Caco-2 (cell line): ENCODE measurements at regions of chr13 and their contacts with region 1.

Region 1: GRCh38 chr13:71320452-71320851 is 546.6 kb downstream of the DACH1 start:
- DNase-seq: peak in 1 of 2 experiments; percentile 55
- H3K4me3 ChIP-seq: no peak overlapping the region
- H3K4me3 Mint-ChIP-seq: no peak overlapping the region
- H3K27ac Mint-ChIP-seq: no peak overlapping the region
- H3K4me1 ChIP-seq: no peaks in the 10 kb centered on the region
- H3K4me1 Mint-ChIP-seq: no peaks in the 10 kb centered on the region
- H3K27me3 ChIP-seq: no peaks in the 10 kb centered on the region
- H3K27me3 Mint-ChIP-seq: no peaks in the 10 kb centered on the region
- CTCF ChIP-seq: peak; percentile 67 to 69

Region 2: GRCh38 chr13:71067165-71067815 is 253.2 kb before region 1 on chr13:
- CTCF ChIA-PET with region 1: no interaction called
- POLR2A ChIA-PET with region 1: no interaction called
- intact Hi-C with region 1: no loop called
- DNase-seq: peak in 1 of 2 experiments; percentile 28
- H3K4me3 ChIP-seq: no peak overlapping the region
- H3K4me3 Mint-ChIP-seq: no peak overlapping the region
- H3K27ac Mint-ChIP-seq: no peak overlapping the region
- H3K4me1 ChIP-seq: peaks cover 11% of the 10 kb centered on the region
- H3K4me1 Mint-ChIP-seq: no peaks in the 10 kb centered on the region
- H3K27me3 ChIP-seq: no peaks in the 10 kb centered on the region
- H3K27me3 Mint-ChIP-seq: no peaks in the 10 kb centered on the region
- CTCF ChIP-seq: peak in 1 of 2 experiments; percentile 46

Region 3: GRCh38 chr13:71240911-71241310 is 79.5 kb before region 1 on chr13:
- CTCF ChIA-PET with region 1: no interaction called
- POLR2A ChIA-PET with region 1: no interaction called
- intact Hi-C with region 1: loop called (anchors 2 kb)
- DNase-seq: peak in 1 of 2 experiments; percentile 16
- H3K4me3 ChIP-seq: no peak overlapping the region
- H3K4me3 Mint-ChIP-seq: no peak overlapping the region
- H3K27ac Mint-ChIP-seq: no peak overlapping the region
- H3K4me1 ChIP-seq: no peaks in the 10 kb centered on the region
- H3K4me1 Mint-ChIP-seq: no peaks in the 10 kb centered on the region
- H3K27me3 ChIP-seq: no peaks in the 10 kb centered on the region
- H3K27me3 Mint-ChIP-seq: no peaks in the 10 kb centered on the region
- CTCF ChIP-seq: peak; percentile 40 to 57

Region 4: GRCh38 chr13:71477735-71478134 is 157.3 kb after region 1 on chr13:
- CTCF ChIA-PET with region 1: no interaction called
- POLR2A ChIA-PET with region 1: no interaction called
- intact Hi-C with region 1: loop called (anchors 1 kb)
- DNase-seq: no peak
- H3K4me3 ChIP-seq: no peak overlapping the region
- H3K4me3 Mint-ChIP-seq: no peak overlapping the region
- H3K27ac Mint-ChIP-seq: no peak overlapping the region
- H3K4me1 ChIP-seq: no peaks in the 10 kb centered on the region
- H3K4me1 Mint-ChIP-seq: peaks cover 6% of the 10 kb centered on the region
- H3K27me3 ChIP-seq: no peaks in the 10 kb centered on the region
- H3K27me3 Mint-ChIP-seq: no peaks in the 10 kb centered on the region
- CTCF ChIP-seq: peak; percentile 35 to 50

Region 5: GRCh38 chr13:71672512-71672911 is 352.1 kb after region 1 on chr13:
- CTCF ChIA-PET with region 1: no interaction called
- POLR2A ChIA-PET with region 1: no interaction called
- intact Hi-C with region 1: loop called (anchors 2 kb)
- DNase-seq: peak in 1 of 2 experiments; percentile 5
- H3K4me3 ChIP-seq: no peak overlapping the region
- H3K4me3 Mint-ChIP-seq: no peak overlapping the region
- H3K27ac Mint-ChIP-seq: no peak overlapping the region
- H3K4me1 ChIP-seq: no peaks in the 10 kb centered on the region
- H3K4me1 Mint-ChIP-seq: no peaks in the 10 kb centered on the region
- H3K27me3 ChIP-seq: no peaks in the 10 kb centered on the region
- H3K27me3 Mint-ChIP-seq: no peaks in the 10 kb centered on the region
- CTCF ChIP-seq: peak in 1 of 2 experiments; percentile 26

Region 6: GRCh38 chr13:71879129-71879535 is 558.7 kb after region 1 on chr13:
- CTCF ChIA-PET with region 1: no interaction called
- POLR2A ChIA-PET with region 1: no interaction called
- intact Hi-C with region 1: loop called (anchors 1 kb)
- DNase-seq: peak in 1 of 2 experiments; percentile 45
- H3K4me3 ChIP-seq: no peak overlapping the region
- H3K4me3 Mint-ChIP-seq: no peak overlapping the region
- H3K27ac Mint-ChIP-seq: no peak overlapping the region
- H3K4me1 ChIP-seq: no peaks in the 10 kb centered on the region
- H3K4me1 Mint-ChIP-seq: peaks cover 6% of the 10 kb centered on the region
- H3K27me3 ChIP-seq: no peaks in the 10 kb centered on the region
- H3K27me3 Mint-ChIP-seq: peaks cover 3% of the 10 kb centered on the region
- CTCF ChIP-seq: peak; percentile 55 to 65

Region 7: DNA sequence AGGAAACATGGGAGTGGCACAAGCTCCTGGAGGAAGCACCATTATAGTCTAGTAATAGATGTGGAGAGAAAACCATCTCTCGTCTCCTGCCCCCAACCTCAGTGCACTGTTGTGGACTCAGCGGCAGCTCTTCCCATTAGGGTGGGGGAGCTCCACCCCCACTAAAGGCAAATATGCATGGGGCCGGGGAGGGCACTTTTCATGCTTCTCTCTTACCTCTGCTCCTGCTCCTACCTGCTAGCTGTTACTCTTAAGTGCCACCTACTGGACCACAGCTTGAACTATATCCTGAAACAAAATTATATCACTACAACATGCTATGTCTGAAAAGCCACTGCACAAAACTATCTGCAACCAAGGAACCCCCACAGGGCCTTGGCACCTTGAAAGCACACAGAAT is 659.2 kb after region 1 on chr13:
- CTCF ChIA-PET with region 1: no interaction called
- POLR2A ChIA-PET with region 1: no interaction called
- intact Hi-C with region 1: loop called (anchors 1 kb)
- DNase-seq: peak in 1 of 2 experiments; percentile 22
- H3K4me3 ChIP-seq: no peak overlapping the region
- H3K4me3 Mint-ChIP-seq: no peak overlapping the region
- H3K27ac Mint-ChIP-seq: no peak overlapping the region
- H3K4me1 ChIP-seq: no peaks in the 10 kb centered on the region
- H3K4me1 Mint-ChIP-seq: no peaks in the 10 kb centered on the region
- H3K27me3 ChIP-seq: no peaks in the 10 kb centered on the region
- H3K27me3 Mint-ChIP-seq: peaks cover 4% of the 10 kb centered on the region
- CTCF ChIP-seq: peak; percentile 30 to 50

Region 8: DNA sequence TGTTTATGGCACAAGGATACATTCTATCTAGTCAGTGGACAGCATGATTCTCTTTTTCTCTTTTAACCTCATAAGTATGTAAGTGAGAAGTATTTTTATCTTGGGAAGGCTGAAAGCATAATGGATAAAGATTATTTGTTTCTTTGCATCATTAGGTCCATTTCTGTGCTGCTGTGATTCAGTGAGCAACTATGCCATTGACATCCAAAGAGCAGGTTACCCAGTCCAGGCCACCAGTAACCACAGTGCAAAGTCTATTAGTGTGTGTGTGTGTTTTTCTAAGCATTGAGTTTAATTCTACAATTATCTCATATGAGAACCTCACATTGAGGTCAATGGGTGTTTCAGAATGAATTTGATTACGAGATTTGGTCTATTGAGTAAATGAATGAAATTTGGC is 705.4 kb after region 1 on chr13:
- CTCF ChIA-PET with region 1: no interaction called
- POLR2A ChIA-PET with region 1: no interaction called
- intact Hi-C with region 1: no loop called
- DNase-seq: no peak
- H3K4me3 ChIP-seq: no peak overlapping the region
- H3K4me3 Mint-ChIP-seq: no peak overlapping the region
- H3K27ac Mint-ChIP-seq: no peak overlapping the region
- H3K4me1 ChIP-seq: no peaks in the 10 kb centered on the region
- H3K4me1 Mint-ChIP-seq: no peaks in the 10 kb centered on the region
- H3K27me3 ChIP-seq: no peaks in the 10 kb centered on the region
- H3K27me3 Mint-ChIP-seq: no peaks in the 10 kb centered on the region
- CTCF ChIP-seq: no peak

Region 9: GRCh38 chr13:72696579-72696978 is 1376.1 kb after region 1 on chr13:
- CTCF ChIA-PET with region 1: no interaction called
- POLR2A ChIA-PET with region 1: no interaction called
- intact Hi-C with region 1: loop called (anchors 2 kb)
- DNase-seq: no peak
- H3K4me3 ChIP-seq: no peak overlapping the region
- H3K4me3 Mint-ChIP-seq: no peak overlapping the region
- H3K27ac Mint-ChIP-seq: no peak overlapping the region
- H3K4me1 ChIP-seq: no peaks in the 10 kb centered on the region
- H3K4me1 Mint-ChIP-seq: no peaks in the 10 kb centered on the region
- H3K27me3 ChIP-seq: no peaks in the 10 kb centered on the region
- H3K27me3 Mint-ChIP-seq: no peaks in the 10 kb centered on the region
- CTCF ChIP-seq: peak in 1 of 2 experiments; percentile 58